ENCODE measurements at regions of chr12 and their contacts with region 1.

Region 1: GRCh38 chr12:51238510-51239334 is at the start of gene DAZAP2:
- DNase-seq: peak; percentile 96
- H3K4me3 Mint-ChIP-seq: peak within 1 kb of the TSS; percentile 96
- H3K27ac Mint-ChIP-seq: peak within 1 kb of the TSS; percentile 99
- H3K4me1 Mint-ChIP-seq: peaks cover 37% of the 10 kb centered on the region
- H3K27me3 Mint-ChIP-seq: no peaks in the 10 kb centered on the region
- total RNA-seq, gene DAZAP2: 106 to 107 TPM

Region 2: GRCh38 chr12:51083126-51083833 is 155.4 kb before region 1 on chr12 and contains the start of gene CSRNP2:
- CTCF ChIA-PET with region 1: no interaction called
- intact Hi-C with region 1: loop called (anchors 1 kb)
- DNase-seq: peak; percentile 96
- H3K4me3 Mint-ChIP-seq: peak within 1 kb of the TSS; percentile 94
- H3K27ac Mint-ChIP-seq: peak within 1 kb of the TSS; percentile 70
- H3K4me1 Mint-ChIP-seq: peaks cover 35% of the 10 kb centered on the region
- H3K27me3 Mint-ChIP-seq: no peaks in the 10 kb centered on the region
- total RNA-seq, gene CSRNP2: 8.4 to 11.0 TPM

Region 3: GRCh38 chr12:51172515-51173431 is 65.9 kb before region 1 on chr12 and contains the start of gene TFCP2:
- CTCF ChIA-PET with region 1: no interaction called
- intact Hi-C with region 1: loop called (anchors 2 kb)
- DNase-seq: peak; percentile 96
- H3K4me3 Mint-ChIP-seq: peak within 1 kb of the TSS; percentile 66
- H3K27ac Mint-ChIP-seq: peak within 1 kb of the TSS; percentile 66
- H3K4me1 Mint-ChIP-seq: peaks cover 14% of the 10 kb centered on the region
- H3K27me3 Mint-ChIP-seq: no peaks in the 10 kb centered on the region
- total RNA-seq, gene TFCP2: 23.6 to 25.4 TPM